Naive thymus-derived CD4-positive, alpha-beta T cell (primary cell): ENCODE measurements at regions of chr17 and their contacts with region 1.

Region 1: GRCh38 chr17:59155439-59156182 is at the start of gene PRR11:
- DNase-seq: peak in 6 of 9 donors; percentile 62 to 99 (median 98)
- ATAC-seq: peak; percentile 91
- H3K4me3 ChIP-seq: peak within 1 kb of the TSS; percentile 89
- H3K4me3 Mint-ChIP-seq: no peak within 1 kb of the TSS
- H3K27ac ChIP-seq: peak within 1 kb of the TSS; percentile 75
- H3K27ac Mint-ChIP-seq: no peak within 1 kb of the TSS
- H3K4me1 ChIP-seq: peaks cover 10 to 13% of the 10 kb centered on the region in 2 donors
- H3K4me1 Mint-ChIP-seq: peaks cover 8 to 52% (median 36%) of the 10 kb centered on the region in 7 donors
- H3K27me3 ChIP-seq: no peaks in the 10 kb centered on the region
- H3K27me3 Mint-ChIP-seq: no peaks in the 10 kb centered on the region
- total RNA-seq, gene PRR11: 0.61 to 41.9 (median 1.00) TPM

Region 2: DNA sequence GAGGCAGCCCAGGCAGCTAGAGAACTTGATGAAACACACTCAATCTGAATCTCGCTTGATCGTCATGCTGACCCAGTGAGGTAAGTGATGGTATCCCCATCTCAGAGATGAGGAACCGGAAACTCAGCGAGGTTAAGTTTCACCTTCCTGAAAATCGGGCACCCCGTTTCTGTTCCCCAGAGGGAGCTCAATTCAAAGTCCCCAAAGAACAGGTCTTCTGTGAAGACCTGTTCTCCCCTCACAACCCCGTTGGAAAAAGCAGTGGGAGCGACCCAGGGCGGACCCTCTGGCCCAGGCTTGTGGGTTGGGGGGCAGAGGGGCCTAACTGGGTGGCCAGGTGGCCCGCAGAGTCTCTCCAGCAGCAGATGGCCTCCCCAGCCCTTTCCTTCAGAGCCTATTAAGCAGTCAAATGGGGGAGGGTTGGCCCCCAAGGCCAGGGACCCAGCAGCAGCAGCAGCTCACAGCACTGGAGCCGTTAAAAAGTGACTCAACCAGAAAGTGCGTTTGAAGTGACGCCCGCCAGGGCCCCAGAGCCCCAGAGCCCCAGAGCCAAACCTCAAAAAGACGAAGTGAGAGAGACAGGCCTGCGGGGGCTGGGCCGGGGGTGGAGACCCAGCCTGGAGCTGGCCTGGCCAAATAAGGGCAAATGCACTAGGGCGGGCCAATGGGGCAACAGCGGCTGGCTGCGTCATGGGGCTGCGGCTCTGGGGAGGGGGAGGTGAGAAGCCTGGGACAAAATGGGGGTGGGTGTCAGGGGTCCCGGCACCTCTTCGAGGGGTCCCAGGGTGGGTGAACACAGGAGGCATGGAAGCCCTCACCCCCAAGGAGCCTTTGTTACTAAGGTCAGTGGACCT is 817.8 kb before region 1 on chr17:
- CTCF ChIA-PET with region 1: no interaction called
- POLR2A ChIA-PET with region 1: no interaction called
- intact Hi-C with region 1: loop called in 1 of 2 experiments (anchors 10 kb)
- DNase-seq: peak; percentile 73 to 93 (median 85)
- ATAC-seq: peak; percentile 88
- H3K4me3 ChIP-seq: peak overlapping the region; percentile 98
- H3K4me3 Mint-ChIP-seq: peak overlapping the region; percentile 86 to 100 (median 97)
- H3K27ac ChIP-seq: peak overlapping the region; percentile 98
- H3K27ac Mint-ChIP-seq: peak overlapping the region; percentile 89 to 100 (median 95)
- H3K4me1 ChIP-seq: peaks cover 59 to 77% of the 10 kb centered on the region in 2 donors
- H3K4me1 Mint-ChIP-seq: peaks cover 52 to 90% (median 65%) of the 10 kb centered on the region in 7 donors
- H3K27me3 ChIP-seq: no peaks in the 10 kb centered on the region
- H3K27me3 Mint-ChIP-seq: no peaks in the 10 kb centered on the region

Region 3: DNA sequence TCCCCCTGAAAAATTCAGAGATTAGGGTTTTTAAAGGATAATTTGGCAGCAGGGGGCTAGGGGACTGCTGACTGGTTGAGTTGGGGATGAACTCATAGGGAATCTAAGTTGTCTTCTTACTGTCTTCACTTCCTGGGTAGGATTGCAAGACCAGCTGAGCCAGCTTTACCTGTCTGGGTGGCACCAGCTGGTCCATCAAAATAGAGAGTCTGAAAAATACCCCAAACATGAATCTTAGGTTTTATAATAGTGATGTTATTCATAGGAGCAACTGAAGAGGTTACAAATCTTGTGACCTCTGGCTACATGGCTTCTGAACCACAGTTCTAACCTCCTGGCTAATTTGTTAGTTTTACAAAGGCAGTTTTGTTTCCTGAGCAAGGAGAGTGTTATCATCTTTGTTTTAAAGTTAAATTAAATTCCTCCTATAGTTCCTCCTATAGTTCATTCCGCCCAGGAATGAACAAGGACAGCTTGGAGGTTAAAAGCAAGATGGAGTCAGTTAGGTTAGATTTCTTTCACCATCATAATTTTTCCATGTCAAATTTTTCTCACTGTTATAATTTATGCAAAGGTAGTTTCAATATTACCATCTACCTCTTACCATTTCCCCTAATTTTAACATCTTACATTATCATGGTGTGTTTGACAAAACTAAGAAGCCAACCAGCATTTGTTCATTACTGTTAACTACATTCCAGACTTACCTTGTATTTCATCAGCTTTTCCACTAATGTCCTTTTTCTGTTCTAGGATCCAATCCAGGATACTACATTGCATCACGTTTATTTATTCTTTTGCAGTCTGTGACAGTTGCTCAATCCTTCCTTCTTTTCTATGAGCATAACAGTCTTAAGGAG is 241.8 kb before region 1 on chr17:
- CTCF ChIA-PET with region 1: no interaction called
- POLR2A ChIA-PET with region 1: no interaction called
- intact Hi-C with region 1: no loop called
- DNase-seq: no peak
- ATAC-seq: no peak
- H3K4me3 ChIP-seq: no peak overlapping the region
- H3K4me3 Mint-ChIP-seq: no peak overlapping the region
- H3K27ac ChIP-seq: no peak overlapping the region
- H3K27ac Mint-ChIP-seq: no peak overlapping the region
- H3K4me1 ChIP-seq: no peaks in the 10 kb centered on the region
- H3K4me1 Mint-ChIP-seq: no peaks in the 10 kb centered on the region
- H3K27me3 ChIP-seq: peaks cover 0 to 4% of the 10 kb centered on the region in 2 donors
- H3K27me3 Mint-ChIP-seq: peaks cover 6 to 26% (median 22%) of the 10 kb centered on the region in 5 donors

Region 4: DNA sequence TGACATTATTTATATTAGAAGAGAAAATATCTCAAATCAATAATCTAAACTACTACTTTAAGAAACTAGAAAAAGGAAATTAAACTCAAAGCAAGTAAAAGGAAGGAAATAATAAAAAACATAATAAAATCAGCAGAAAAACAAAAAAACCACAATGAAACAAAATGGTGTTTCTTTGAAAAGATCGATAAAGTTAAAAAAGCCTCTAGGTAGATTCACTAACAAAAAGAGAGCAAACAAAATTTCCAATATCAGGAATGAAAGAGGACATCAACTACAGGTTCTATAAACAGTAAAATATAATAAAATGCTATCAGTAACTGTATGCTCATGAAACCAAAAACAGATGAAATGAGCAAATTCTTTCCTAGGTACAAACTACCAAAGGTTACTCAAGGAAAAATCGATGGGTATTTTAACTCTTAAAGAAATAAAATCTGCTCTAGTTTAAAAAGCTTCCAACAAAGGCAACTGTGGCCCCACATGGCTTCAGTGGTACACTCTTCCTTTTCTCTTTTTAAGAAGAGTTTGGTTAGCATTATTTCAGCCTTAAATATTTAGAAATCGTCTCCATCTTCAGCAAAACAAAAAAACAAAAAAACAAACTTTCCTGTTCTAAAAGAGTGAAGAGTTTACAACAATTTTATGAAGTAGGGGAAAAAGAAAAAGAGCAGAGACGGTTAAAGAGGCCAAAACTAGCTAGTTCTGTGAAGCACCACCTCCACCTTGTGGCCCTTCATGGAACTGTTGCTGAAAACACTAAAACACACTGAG is 151.1 kb before region 1 on chr17:
- CTCF ChIA-PET with region 1: no interaction called
- POLR2A ChIA-PET with region 1: no interaction called
- intact Hi-C with region 1: loop called in 1 of 2 experiments (anchors 2 kb)
- DNase-seq: peak; percentile 17 to 73 (median 60)
- ATAC-seq: peak; percentile 73
- H3K4me3 ChIP-seq: no peak overlapping the region
- H3K4me3 Mint-ChIP-seq: peak overlapping the region in 2 of 10 donors; percentile 9 to 12
- H3K27ac ChIP-seq: no peak overlapping the region
- H3K27ac Mint-ChIP-seq: peak overlapping the region; percentile 50 to 86 (median 84)
- H3K4me1 ChIP-seq: peaks cover 5 to 6% of the 10 kb centered on the region in 2 donors
- H3K4me1 Mint-ChIP-seq: peaks cover 5 to 32% (median 20%) of the 10 kb centered on the region in 7 donors
- H3K27me3 ChIP-seq: no peaks in the 10 kb centered on the region
- H3K27me3 Mint-ChIP-seq: no peaks in the 10 kb centered on the region

Region 5: DNA sequence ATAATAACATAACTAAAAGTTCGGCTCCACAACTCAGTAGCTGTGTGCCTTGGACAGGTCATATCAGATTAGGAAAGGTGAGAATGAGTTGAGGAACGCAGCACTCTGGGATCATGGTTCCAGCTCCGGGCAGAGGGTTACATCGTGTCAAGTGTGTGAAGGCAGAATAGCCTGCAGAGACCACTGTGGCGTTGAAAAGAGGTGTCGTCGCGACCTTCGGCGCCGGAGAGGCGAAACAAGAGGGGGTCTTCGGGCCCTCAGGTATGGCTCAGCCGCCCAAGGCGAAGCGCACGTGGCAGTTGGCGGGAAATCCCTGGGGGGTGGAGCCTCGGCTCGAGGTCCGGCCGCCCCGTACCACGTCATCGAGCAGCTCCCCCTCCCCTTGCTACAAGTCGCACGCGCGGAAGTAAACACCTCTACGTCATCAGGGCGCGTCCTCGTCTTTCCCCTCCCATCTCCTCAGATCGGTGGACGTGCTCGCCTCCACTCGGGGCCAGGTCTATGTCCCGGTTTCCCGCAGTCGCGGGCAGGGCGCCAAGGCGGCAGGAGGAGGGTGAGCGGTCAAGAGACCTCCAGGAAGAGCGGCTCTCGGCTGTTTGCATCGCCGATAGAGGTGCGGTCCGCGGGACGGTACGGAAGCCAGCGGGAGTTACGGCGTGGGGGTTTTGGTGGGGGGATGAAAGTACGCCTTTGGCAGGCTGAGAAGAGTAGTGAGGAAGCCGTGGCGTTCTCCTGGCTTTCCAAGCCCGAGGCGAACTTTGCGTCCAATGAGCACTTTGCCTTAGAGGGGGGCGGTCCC is 409.8 kb after region 1 on chr17 and contains the start of gene DHX40:
- CTCF ChIA-PET with region 1: no interaction called
- POLR2A ChIA-PET with region 1: interaction called, 4 read pairs
- intact Hi-C with region 1: loop called in 1 of 2 experiments (anchors 1 kb)
- DNase-seq: peak; percentile 80 to 95 (median 92)
- ATAC-seq: peak; percentile 97
- H3K4me3 ChIP-seq: peak within 1 kb of the TSS; percentile 92
- H3K4me3 Mint-ChIP-seq: peak within 1 kb of the TSS; percentile 97 to 100 (median 100)
- H3K27ac ChIP-seq: peak within 1 kb of the TSS; percentile 95
- H3K27ac Mint-ChIP-seq: peak within 1 kb of the TSS; percentile 98 to 100 (median 100)
- H3K4me1 ChIP-seq: peaks cover 10 to 14% of the 10 kb centered on the region in 2 donors
- H3K4me1 Mint-ChIP-seq: peaks cover 0 to 30% (median 23%) of the 10 kb centered on the region in 7 donors
- H3K27me3 ChIP-seq: no peaks in the 10 kb centered on the region
- H3K27me3 Mint-ChIP-seq: peaks cover 0 to 3% (median 0%) of the 10 kb centered on the region in 5 donors
- total RNA-seq, gene DHX40: 21.3 to 44.9 (median 29.4) TPM

Region 6: DNA sequence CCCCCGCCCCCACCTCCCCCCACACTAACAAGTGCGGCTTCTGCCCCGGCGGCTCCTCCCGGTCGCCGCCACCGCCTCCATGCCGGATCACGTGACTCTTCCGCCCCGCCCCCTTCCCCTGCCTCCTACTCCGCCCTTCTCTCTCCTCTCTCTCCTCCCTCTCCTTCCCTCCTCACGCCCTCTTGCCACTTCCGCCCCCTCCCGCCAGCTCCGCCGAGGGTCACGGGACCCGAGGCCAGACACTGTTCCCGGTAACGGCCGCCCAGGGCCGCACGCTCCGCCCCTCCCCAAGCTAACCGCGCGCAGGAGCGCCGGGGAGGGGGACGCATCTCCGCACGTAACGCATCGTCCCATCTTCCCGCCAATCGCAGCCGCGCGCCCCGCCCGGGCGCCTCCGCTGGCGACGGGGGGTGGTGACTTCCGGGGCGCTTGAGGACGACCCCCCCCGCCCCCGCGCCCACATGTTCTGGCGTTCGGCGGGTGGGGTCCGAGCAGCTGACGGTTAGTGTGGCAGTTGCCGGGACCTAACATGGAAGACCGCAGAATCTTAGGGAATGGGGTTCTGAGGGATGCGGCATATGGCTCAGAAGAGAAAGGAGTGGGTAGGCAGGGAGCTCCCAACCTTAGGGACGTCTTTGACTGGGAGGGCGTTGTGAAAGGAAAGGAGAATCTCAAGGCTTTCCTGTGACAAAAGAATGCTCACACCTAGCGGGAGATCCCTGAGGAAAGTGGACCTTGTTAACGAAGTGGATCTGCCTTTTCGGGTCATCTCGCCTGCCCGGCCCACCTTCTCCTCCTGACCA is 1236.6 kb after region 1 on chr17 and contains the start of gene USP32:
- CTCF ChIA-PET with region 1: no interaction called
- POLR2A ChIA-PET with region 1: no interaction called
- intact Hi-C with region 1: loop called in 1 of 2 experiments (anchors 1 kb)
- DNase-seq: peak; percentile 94 to 98 (median 96)
- ATAC-seq: peak; percentile 95
- H3K4me3 ChIP-seq: peak within 1 kb of the TSS; percentile 97
- H3K4me3 Mint-ChIP-seq: peak within 1 kb of the TSS; percentile 93 to 99 (median 96)
- H3K27ac ChIP-seq: peak within 1 kb of the TSS; percentile 92
- H3K27ac Mint-ChIP-seq: peak within 1 kb of the TSS; percentile 92 to 99 (median 97)
- H3K4me1 ChIP-seq: peaks cover 5 to 18% of the 10 kb centered on the region in 2 donors
- H3K4me1 Mint-ChIP-seq: peaks cover 30 to 55% (median 41%) of the 10 kb centered on the region in 7 donors
- H3K27me3 ChIP-seq: no peaks in the 10 kb centered on the region
- H3K27me3 Mint-ChIP-seq: no peaks in the 10 kb centered on the region
- total RNA-seq, gene USP32: 31.6 to 58.1 (median 35.4) TPM